Endothelial cell of umbilical vein (primary cell): ENCODE measurements at regions of chr16 and their contacts with region 1.

Region 1: GRCh38 chr16:47141773-47142485 is 1.8 kb downstream of the NETO2 start:
- DNase-seq: peak; percentile 90
- H3K4me3 ChIP-seq: peak overlapping the region; percentile 62 to 83 (median 69)
- H3K27ac ChIP-seq: no peak overlapping the region
- H3K4me1 ChIP-seq: peaks cover 12% of the 10 kb centered on the region
- H3K27me3 ChIP-seq: no peaks in the 10 kb centered on the region
- CTCF ChIP-seq: peak; percentile 94 to 96
- POLR2A ChIP-seq: no peak

Region 2: GRCh38 chr16:46947900-46948547 is 193.9 kb before region 1 on chr16:
- CTCF ChIA-PET with region 1: interaction called, 9 read pairs
- POLR2A ChIA-PET with region 1: no interaction called
- dilution Hi-C with region 1: no loop called
- intact Hi-C with region 1: loop called (anchors 2 kb)
- DNase-seq: peak; percentile 46
- H3K4me3 ChIP-seq: no peak overlapping the region
- H3K27ac ChIP-seq: no peak overlapping the region
- H3K4me1 ChIP-seq: no peaks in the 10 kb centered on the region
- H3K27me3 ChIP-seq: no peaks in the 10 kb centered on the region
- CTCF ChIP-seq: peak; percentile 28 to 50
- POLR2A ChIP-seq: no peak

Region 3: DNA sequence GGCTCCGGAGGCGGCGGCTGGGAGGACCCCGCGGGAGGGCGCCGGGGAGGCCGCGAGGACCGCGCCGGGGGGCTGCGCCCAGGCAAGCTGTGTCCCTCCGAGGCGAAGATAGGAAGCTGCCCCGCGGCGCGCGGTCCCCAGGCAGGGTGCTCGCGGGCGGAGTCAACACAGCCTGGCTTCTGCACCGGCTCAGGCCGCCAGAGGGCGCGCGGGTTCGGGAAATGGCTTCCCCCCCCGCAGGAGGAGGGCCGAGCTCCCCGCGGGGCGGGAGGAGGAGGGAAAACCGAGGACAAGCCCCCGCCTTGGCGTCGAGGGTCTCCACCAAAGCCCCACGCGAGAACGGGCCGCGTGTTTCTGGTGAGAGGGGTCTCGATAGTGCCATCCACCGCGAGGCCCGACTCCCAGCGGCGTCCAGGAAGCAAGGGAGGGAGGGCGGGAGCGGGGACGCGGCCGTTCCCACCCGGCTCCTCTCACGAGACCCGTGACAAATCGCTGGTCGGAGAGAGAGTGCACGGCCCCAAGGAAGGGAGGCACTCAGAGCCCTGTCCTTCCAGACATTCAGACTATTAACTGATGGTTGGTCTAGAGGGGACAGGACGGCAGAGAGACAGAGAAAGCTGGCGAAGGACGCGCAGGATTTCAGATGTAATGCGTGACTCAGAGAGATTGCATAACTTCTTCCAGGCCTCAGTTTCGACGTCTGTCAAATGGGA is 104.0 kb before region 1 on chr16:
- CTCF ChIA-PET with region 1: interaction called, 192 read pairs
- POLR2A ChIA-PET with region 1: no interaction called
- dilution Hi-C with region 1: no loop called
- intact Hi-C with region 1: loop called (anchors 1 kb)
- DNase-seq: peak; percentile 76
- H3K4me3 ChIP-seq: peak overlapping the region; percentile 36 to 64 (median 38)
- H3K27ac ChIP-seq: no peak overlapping the region
- H3K4me1 ChIP-seq: no peaks in the 10 kb centered on the region
- H3K27me3 ChIP-seq: peaks cover 0 to 2% of the 10 kb centered on the region in 2 experiments
- CTCF ChIP-seq: peak; percentile 92 to 95
- POLR2A ChIP-seq: no peak

Region 4: GRCh38 chr16:47125757-47126156 is 16.2 kb before region 1 on chr16:
- CTCF ChIA-PET with region 1: interaction called, 75 read pairs
- POLR2A ChIA-PET with region 1: no interaction called
- dilution Hi-C with region 1: no loop called
- intact Hi-C with region 1: loop called (anchors 2 kb)
- DNase-seq: no peak
- H3K4me3 ChIP-seq: no peak overlapping the region
- H3K27ac ChIP-seq: no peak overlapping the region
- H3K4me1 ChIP-seq: no peaks in the 10 kb centered on the region
- H3K27me3 ChIP-seq: no peaks in the 10 kb centered on the region
- CTCF ChIP-seq: no peak
- POLR2A ChIP-seq: no peak

Region 5: GRCh38 chr16:47377194-47377593 is 235.3 kb after region 1 on chr16:
- CTCF ChIA-PET with region 1: no interaction called
- POLR2A ChIA-PET with region 1: no interaction called
- dilution Hi-C with region 1: no loop called
- intact Hi-C with region 1: no loop called
- DNase-seq: no peak
- H3K4me3 ChIP-seq: no peak overlapping the region
- H3K27ac ChIP-seq: no peak overlapping the region
- H3K4me1 ChIP-seq: peaks cover 22% of the 10 kb centered on the region
- H3K27me3 ChIP-seq: no peaks in the 10 kb centered on the region
- CTCF ChIP-seq: no peak
- POLR2A ChIP-seq: no peak

Region 6: DNA sequence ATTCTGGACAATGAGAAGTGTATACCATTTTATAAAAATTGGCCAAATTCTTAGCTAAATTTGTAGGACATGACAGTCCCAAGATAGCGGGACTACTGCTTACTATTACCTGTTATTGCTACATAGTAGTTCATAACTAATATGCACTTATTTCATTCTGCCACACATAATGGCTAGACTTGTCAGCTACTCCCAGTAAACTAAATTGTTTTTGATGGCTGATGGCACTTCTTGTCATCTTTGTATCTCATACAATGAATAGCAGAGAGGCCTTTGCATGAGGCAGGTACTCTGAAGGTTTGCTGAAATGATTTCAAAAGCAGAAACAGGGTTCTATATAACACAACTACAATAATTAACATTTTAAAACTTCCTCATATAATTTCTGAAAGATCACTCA is 274.9 kb after region 1 on chr16:
- CTCF ChIA-PET with region 1: no interaction called
- POLR2A ChIA-PET with region 1: no interaction called
- dilution Hi-C with region 1: no loop called
- intact Hi-C with region 1: no loop called
- DNase-seq: no peak
- H3K4me3 ChIP-seq: no peak overlapping the region
- H3K27ac ChIP-seq: no peak overlapping the region
- H3K4me1 ChIP-seq: no peaks in the 10 kb centered on the region
- H3K27me3 ChIP-seq: no peaks in the 10 kb centered on the region
- CTCF ChIP-seq: no peak
- POLR2A ChIP-seq: no peak

Region 7: DNA sequence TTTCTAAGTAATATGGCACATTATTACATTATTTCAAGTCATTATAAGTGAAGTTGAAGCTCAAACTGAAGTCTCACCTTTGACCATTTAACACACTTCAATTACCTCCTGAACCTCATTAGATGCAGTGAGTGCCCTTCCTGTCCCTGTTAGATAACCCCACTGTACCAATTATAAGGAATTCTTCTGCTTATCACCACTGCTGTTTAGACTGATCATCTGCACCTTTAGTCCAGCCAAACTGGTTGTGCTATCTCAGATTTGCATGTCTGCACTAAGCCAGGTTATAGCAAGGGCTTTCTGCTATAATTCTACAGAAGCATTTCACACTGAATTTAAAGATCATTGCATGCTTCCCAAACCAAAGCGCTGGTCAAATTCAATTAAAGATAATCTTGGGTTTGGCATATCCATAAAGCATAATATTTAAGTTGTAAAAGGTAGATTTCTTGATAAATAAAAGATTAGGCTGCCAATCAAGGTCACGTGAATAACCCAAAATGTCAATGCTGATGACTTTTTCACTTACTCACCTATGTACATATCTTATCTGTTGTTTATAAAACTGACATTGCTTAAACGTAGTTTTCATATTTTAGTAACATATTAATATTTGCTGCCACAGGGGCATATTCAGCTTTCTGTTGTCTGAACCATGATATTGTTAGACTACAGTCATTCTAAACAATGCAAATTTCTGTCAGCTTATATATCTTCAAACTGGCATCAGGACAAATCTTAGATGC is 307.1 kb after region 1 on chr16:
- CTCF ChIA-PET with region 1: no interaction called
- POLR2A ChIA-PET with region 1: no interaction called
- dilution Hi-C with region 1: no loop called
- intact Hi-C with region 1: no loop called
- DNase-seq: no peak
- H3K4me3 ChIP-seq: no peak overlapping the region
- H3K27ac ChIP-seq: no peak overlapping the region
- H3K4me1 ChIP-seq: no peaks in the 10 kb centered on the region
- H3K27me3 ChIP-seq: no peaks in the 10 kb centered on the region
- CTCF ChIP-seq: no peak
- POLR2A ChIP-seq: no peak

Region 8: GRCh38 chr16:47644166-47644565 is 502.2 kb after region 1 on chr16:
- CTCF ChIA-PET with region 1: no interaction called
- POLR2A ChIA-PET with region 1: no interaction called
- dilution Hi-C with region 1: no loop called
- intact Hi-C with region 1: loop called (anchors 5 kb)
- DNase-seq: peak; percentile 80
- H3K4me3 ChIP-seq: no peak overlapping the region
- H3K27ac ChIP-seq: no peak overlapping the region
- H3K4me1 ChIP-seq: peaks cover 13% of the 10 kb centered on the region
- H3K27me3 ChIP-seq: no peaks in the 10 kb centered on the region
- CTCF ChIP-seq: no peak
- POLR2A ChIP-seq: no peak

Region 9: DNA sequence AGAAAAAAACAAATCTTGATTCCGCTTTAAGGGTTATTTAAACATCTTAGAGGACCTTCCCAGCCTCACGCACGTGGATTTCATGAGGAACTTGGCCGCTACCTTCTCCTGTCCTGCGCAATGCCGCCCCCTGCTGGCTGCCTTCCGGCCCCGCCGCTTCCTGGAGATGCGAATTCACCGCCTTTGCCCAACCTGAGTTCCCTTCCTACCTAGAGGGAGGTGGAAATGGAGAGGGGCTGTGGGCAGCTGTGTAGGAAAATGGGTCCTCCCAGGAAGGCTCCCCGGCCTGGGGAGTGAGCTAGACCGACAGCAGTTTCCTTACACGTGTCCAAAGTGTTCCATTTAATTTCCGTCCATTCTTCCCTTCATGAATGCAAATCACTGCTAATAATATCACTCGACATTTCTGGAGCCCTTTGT is 1014.9 kb after region 1 on chr16:
- CTCF ChIA-PET with region 1: interaction called, 91 read pairs
- POLR2A ChIA-PET with region 1: no interaction called
- dilution Hi-C with region 1: no loop called
- intact Hi-C with region 1: loop called (anchors 1 kb)
- DNase-seq: peak; percentile 63
- H3K4me3 ChIP-seq: no peak overlapping the region
- H3K27ac ChIP-seq: no peak overlapping the region
- H3K4me1 ChIP-seq: no peaks in the 10 kb centered on the region
- H3K27me3 ChIP-seq: peaks cover 0 to 3% of the 10 kb centered on the region in 2 experiments
- CTCF ChIP-seq: peak; percentile 94 to 95
- POLR2A ChIP-seq: no peak